Mammary epithelial cell (primary cell): ENCODE measurements at regions of chr5 and their contacts with region 1.

Region 1: GRCh38 chr5:133877351-133878235 is 90.8 kb downstream of the C5orf15 start:
- DNase-seq: no peak
- H3K4me3 ChIP-seq: no peak overlapping the region
- H3K27ac ChIP-seq: no peak overlapping the region
- H3K4me1 ChIP-seq: no peaks in the 10 kb centered on the region
- H3K27me3 ChIP-seq: no peaks in the 10 kb centered on the region
- CTCF ChIP-seq: no peak

Region 2: DNA sequence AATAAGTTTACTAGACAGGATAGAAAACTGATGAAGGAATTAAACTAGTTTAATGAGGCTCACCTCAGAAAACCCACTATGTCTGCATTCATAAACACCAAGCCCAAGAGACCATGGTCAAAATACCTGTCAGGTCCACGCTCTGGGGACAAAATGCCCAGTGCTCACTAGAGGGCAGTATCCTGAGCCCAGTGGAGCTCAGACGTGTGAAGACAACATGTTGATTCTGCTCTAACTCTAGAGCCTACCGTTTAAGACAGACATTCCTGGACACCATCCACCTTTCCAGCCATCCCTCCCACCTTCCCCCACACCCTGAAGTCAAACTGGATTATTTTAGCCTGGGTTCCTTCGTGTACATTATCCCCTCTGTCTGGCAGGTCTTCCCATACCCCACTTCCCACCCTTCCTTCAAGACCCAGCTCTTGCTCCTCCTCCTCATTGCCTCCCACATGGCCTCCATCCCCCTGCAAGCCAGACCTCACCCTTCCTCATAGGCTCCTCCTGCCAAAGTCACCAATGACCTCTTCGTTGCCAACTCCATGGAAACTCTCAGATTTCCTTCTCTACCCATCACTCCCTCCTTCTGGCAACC is 122.9 kb before region 1 on chr5:
- CTCF ChIA-PET with region 1: no interaction called
- dilution Hi-C with region 1: no loop called
- in situ Hi-C with region 1: no loop called
- intact Hi-C with region 1: loop called (anchors 1 kb)
- DNase-seq: peak; percentile 7
- H3K4me3 ChIP-seq: no peak overlapping the region
- H3K27ac ChIP-seq: no peak overlapping the region
- H3K4me1 ChIP-seq: peaks cover 6% of the 10 kb centered on the region
- H3K27me3 ChIP-seq: no peaks in the 10 kb centered on the region
- CTCF ChIP-seq: peak; percentile 54 to 74

Region 3: GRCh38 chr5:133839721-133840120 is 37.9 kb before region 1 on chr5:
- CTCF ChIA-PET with region 1: no interaction called
- dilution Hi-C with region 1: loop called (anchors 5 kb)
- in situ Hi-C with region 1: no loop called
- intact Hi-C with region 1: no loop called
- DNase-seq: no peak
- H3K4me3 ChIP-seq: no peak overlapping the region
- H3K27ac ChIP-seq: no peak overlapping the region
- H3K4me1 ChIP-seq: no peaks in the 10 kb centered on the region
- H3K27me3 ChIP-seq: peaks cover 19% of the 10 kb centered on the region
- CTCF ChIP-seq: no peak

Region 4: DNA sequence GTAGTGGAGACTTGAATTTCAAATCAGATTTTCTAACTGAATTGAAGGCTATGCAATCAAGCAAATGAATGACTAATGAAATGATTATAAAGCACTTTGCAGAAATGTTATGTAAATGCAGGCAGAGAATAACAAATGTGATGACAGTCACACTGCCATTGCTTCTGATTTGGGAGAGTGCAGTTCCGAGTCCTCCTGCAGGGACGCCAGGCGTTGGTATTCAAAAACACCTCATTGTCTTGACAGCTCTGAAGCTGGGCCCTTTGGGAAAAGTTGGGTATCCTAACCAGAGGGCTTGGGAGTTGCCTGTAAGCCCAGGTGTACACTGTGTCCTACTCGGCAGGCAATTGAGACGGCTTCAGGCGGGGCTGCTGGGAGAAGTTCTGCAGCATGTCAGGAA is 33.0 kb after region 1 on chr5:
- CTCF ChIA-PET with region 1: no interaction called
- dilution Hi-C with region 1: loop called (anchors 5 kb)
- in situ Hi-C with region 1: no loop called
- intact Hi-C with region 1: no loop called
- DNase-seq: no peak
- H3K4me3 ChIP-seq: no peak overlapping the region
- H3K27ac ChIP-seq: no peak overlapping the region
- H3K4me1 ChIP-seq: no peaks in the 10 kb centered on the region
- H3K27me3 ChIP-seq: no peaks in the 10 kb centered on the region
- CTCF ChIP-seq: no peak

Region 5: GRCh38 chr5:134038138-134038537 is 160.5 kb after region 1 on chr5:
- CTCF ChIA-PET with region 1: no interaction called
- dilution Hi-C with region 1: no loop called
- in situ Hi-C with region 1: no loop called
- intact Hi-C with region 1: no loop called
- DNase-seq: no peak
- H3K4me3 ChIP-seq: no peak overlapping the region
- H3K27ac ChIP-seq: no peak overlapping the region
- H3K4me1 ChIP-seq: no peaks in the 10 kb centered on the region
- H3K27me3 ChIP-seq: no peaks in the 10 kb centered on the region
- CTCF ChIP-seq: no peak